PC-9 (cell line): ENCODE measurements at regions of chr6 and their contacts with region 1.

Region 1: DNA sequence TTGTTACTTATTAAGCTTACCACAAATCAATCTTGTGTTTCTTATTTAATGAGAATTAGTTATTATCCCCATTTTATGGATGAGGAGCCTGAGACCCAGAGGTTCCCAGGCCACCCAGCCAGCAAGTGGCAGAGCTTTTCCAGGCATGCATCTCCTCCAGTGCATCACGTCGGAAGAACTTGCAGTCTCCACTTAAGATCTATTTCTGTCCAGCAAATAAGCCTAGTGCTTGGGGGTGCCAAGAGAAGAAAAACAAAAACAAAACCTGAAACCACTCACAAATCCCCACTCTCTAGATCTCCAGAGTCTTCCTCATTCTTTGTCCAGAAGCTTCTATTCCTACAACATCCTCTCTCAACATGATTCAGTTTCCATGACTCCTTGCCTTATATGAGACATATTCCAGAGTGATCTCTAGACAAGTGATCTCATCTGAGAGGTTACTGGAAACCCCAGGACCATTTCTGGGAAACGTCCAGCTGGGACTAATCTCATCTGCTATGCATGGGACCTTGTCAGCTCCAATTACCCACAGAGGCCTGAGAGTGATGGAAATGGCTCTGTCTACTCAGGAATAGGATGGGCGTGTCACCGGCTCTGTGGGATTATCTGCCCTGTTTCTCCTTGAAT is 4.1 kb downstream of the GUCA1B start:
- DNase-seq: no peak
- H3K4me3 ChIP-seq: no peak overlapping the region
- H3K27ac ChIP-seq: no peak overlapping the region
- H3K4me1 ChIP-seq: peaks cover 13% of the 10 kb centered on the region; the same call in 1 of the 2 replicates
- H3K27me3 ChIP-seq: no peaks in the 10 kb centered on the region
- CTCF ChIP-seq: no peak

Region 2: GRCh38 chr6:42009966-42010891 is 180.4 kb before region 1 on chr6:
- CTCF ChIA-PET with region 1: interaction called, 16 read pairs
- POLR2A ChIA-PET with region 1: no interaction called
- intact Hi-C with region 1: no loop called
- DNase-seq: no peak
- H3K4me3 ChIP-seq: no peak overlapping the region
- H3K27ac ChIP-seq: no peak overlapping the region
- H3K4me1 ChIP-seq: no peaks in the 10 kb centered on the region
- H3K27me3 ChIP-seq: no peaks in the 10 kb centered on the region
- CTCF ChIP-seq: no peak

Region 3: GRCh38 chr6:42230345-42231321 is 40.0 kb after region 1 on chr6:
- CTCF ChIA-PET with region 1: interaction called, 16 read pairs
- POLR2A ChIA-PET with region 1: interaction called, 10 read pairs
- intact Hi-C with region 1: no loop called
- DNase-seq: no peak
- H3K4me3 ChIP-seq: no peak overlapping the region
- H3K27ac ChIP-seq: 0 out of 2 replicates have a peak overlapping the region, but pooled peaks have one; percentile 2
- H3K4me1 ChIP-seq: peaks cover 47% of the 10 kb centered on the region
- H3K27me3 ChIP-seq: no peaks in the 10 kb centered on the region
- CTCF ChIP-seq: peak; percentile 69